Caco-2 (cell line): ENCODE measurements at regions of chr11 and their contacts with region 1.

Region 1: DNA sequence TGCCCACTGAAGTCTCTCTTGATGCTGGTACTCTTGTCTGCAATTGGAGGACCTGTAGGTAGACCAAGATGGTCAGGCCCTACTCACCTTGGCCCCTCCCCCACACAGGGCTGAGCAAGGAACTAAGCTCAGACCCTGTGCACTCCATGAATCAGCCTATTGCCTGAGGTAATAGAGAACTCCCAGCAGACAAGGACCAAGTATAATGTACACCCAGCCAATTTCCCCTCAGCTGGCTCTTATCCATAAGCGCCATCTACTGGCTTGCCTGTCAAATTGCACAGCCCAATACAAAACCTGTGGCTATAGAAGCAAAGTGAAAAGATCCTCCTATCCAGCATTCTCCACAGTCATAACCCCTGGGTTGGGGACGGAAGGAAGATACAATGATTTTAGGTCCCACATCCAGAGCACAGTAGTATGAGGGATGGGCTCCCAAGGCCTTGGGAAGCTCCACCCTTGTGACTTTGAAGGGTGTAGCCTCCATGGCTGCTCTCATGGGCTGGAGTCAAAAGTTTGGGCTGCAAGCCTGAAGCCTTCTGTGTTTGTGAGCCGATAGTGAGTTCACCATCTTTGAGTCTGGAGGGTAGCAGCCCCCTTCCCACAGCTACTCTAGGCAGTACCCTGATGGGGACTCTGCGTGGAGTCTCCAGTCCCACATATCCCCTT is 56.0 kb downstream of the GLYATL2 start:
- DNase-seq: peak; percentile 69 to 76
- H3K4me3 ChIP-seq: no peak overlapping the region
- H3K4me3 Mint-ChIP-seq: no peak overlapping the region
- H3K27ac Mint-ChIP-seq: no peak overlapping the region
- H3K4me1 ChIP-seq: peaks cover 40% of the 10 kb centered on the region
- H3K4me1 Mint-ChIP-seq: peaks cover 24% of the 10 kb centered on the region
- H3K27me3 ChIP-seq: no peaks in the 10 kb centered on the region
- H3K27me3 Mint-ChIP-seq: no peaks in the 10 kb centered on the region
- CTCF ChIP-seq: peak; percentile 77 to 89

Region 2: GRCh38 chr11:58567889-58568512 is 220.5 kb before region 1 on chr11:
- CTCF ChIA-PET with region 1: no interaction called
- POLR2A ChIA-PET with region 1: no interaction called
- intact Hi-C with region 1: loop called (anchors 2 kb)
- DNase-seq: peak; percentile 68 to 73
- H3K4me3 ChIP-seq: no peak overlapping the region
- H3K4me3 Mint-ChIP-seq: no peak overlapping the region
- H3K27ac Mint-ChIP-seq: no peak overlapping the region
- H3K4me1 ChIP-seq: no peaks in the 10 kb centered on the region
- H3K4me1 Mint-ChIP-seq: no peaks in the 10 kb centered on the region
- H3K27me3 ChIP-seq: no peaks in the 10 kb centered on the region
- H3K27me3 Mint-ChIP-seq: no peaks in the 10 kb centered on the region
- CTCF ChIP-seq: peak; percentile 86 to 95

Region 3: GRCh38 chr11:58654079-58654907 is 134.2 kb before region 1 on chr11:
- CTCF ChIA-PET with region 1: interaction called, 6 read pairs
- POLR2A ChIA-PET with region 1: no interaction called
- intact Hi-C with region 1: loop called (anchors 1 kb)
- DNase-seq: peak; percentile 75 to 82
- H3K4me3 ChIP-seq: no peak overlapping the region
- H3K4me3 Mint-ChIP-seq: no peak overlapping the region
- H3K27ac Mint-ChIP-seq: no peak overlapping the region
- H3K4me1 ChIP-seq: peaks cover 13% of the 10 kb centered on the region; the same call in 1 of the 2 replicates
- H3K4me1 Mint-ChIP-seq: peaks cover 23% of the 10 kb centered on the region
- H3K27me3 ChIP-seq: no peaks in the 10 kb centered on the region
- H3K27me3 Mint-ChIP-seq: no peaks in the 10 kb centered on the region
- CTCF ChIP-seq: peak; percentile 88 to 97

Region 4: DNA sequence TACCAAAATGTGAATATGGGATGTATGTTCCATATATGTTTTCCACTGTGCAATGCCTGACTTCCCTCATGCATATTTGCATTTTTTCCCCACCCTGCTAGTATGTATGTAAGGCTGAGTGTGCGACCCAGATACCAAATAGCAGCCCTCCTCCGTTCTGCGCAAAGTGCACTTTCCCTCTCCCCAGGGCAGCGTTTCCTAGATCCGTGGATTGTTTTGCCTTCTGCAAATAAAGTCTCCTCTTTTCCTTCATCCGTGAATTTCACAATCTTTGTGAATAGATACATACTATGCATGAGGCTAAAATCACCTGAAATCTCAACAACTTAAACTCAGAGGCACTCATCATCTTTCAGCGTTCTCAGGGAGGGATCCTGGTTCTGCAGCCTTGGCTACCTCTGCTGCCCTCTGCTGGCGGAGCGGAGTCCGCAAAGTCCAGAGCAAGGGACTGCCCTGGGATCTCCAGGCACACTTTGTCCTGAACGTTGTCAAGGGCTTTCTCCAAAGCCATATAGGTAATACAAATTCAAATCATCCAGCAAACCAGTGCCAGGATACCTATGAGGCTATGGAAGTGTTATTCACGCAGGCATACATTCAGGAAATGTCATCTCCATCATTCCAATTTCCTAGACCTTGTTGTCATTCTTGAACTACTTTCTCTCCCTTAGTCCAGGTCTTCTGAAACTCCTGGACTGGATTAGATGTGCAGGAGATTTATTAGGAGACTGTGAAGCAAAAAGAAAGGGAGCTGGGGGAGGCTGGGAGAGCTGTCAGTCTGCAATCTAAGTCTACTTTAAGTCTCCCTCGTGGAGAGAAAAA is 112.9 kb before region 1 on chr11:
- CTCF ChIA-PET with region 1: interaction called, 3 read pairs
- POLR2A ChIA-PET with region 1: no interaction called
- intact Hi-C with region 1: loop called (anchors 1 kb)
- DNase-seq: peak; percentile 78 to 85
- H3K4me3 ChIP-seq: no peak overlapping the region
- H3K4me3 Mint-ChIP-seq: no peak overlapping the region
- H3K27ac Mint-ChIP-seq: no peak overlapping the region
- H3K4me1 ChIP-seq: no peaks in the 10 kb centered on the region
- H3K4me1 Mint-ChIP-seq: no peaks in the 10 kb centered on the region
- H3K27me3 ChIP-seq: no peaks in the 10 kb centered on the region
- H3K27me3 Mint-ChIP-seq: no peaks in the 10 kb centered on the region
- CTCF ChIP-seq: peak; percentile 92 to 98

Region 5: DNA sequence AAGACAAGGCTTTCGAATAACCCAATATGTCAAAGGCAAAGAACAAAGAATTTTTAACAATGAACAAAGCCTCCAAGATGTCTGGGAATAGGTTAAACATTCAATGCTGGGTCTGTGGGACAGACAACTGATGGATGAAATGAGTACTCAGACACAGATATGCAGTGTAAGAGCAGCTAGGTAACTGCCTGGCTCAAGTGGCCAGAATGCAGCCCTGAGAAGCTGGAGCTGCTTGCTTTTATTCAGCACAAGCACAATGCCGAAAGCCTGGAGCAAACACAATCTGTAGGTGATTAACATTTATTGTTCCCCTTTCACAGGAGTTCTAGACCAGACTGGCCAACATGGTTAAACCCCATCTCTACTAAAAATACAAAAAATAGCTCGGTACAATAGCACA is 80.7 kb before region 1 on chr11:
- CTCF ChIA-PET with region 1: no interaction called
- POLR2A ChIA-PET with region 1: no interaction called
- intact Hi-C with region 1: loop called (anchors 5 kb)
- DNase-seq: no peak
- H3K4me3 ChIP-seq: no peak overlapping the region
- H3K4me3 Mint-ChIP-seq: no peak overlapping the region
- H3K27ac Mint-ChIP-seq: no peak overlapping the region
- H3K4me1 ChIP-seq: no peaks in the 10 kb centered on the region
- H3K4me1 Mint-ChIP-seq: no peaks in the 10 kb centered on the region
- H3K27me3 ChIP-seq: no peaks in the 10 kb centered on the region
- H3K27me3 Mint-ChIP-seq: no peaks in the 10 kb centered on the region
- CTCF ChIP-seq: no peak

Region 6: GRCh38 chr11:58745705-58746364 is 42.7 kb before region 1 on chr11:
- CTCF ChIA-PET with region 1: no interaction called
- POLR2A ChIA-PET with region 1: no interaction called
- intact Hi-C with region 1: loop called (anchors 5 kb)
- DNase-seq: no peak
- H3K4me3 ChIP-seq: no peak overlapping the region
- H3K4me3 Mint-ChIP-seq: no peak overlapping the region
- H3K27ac Mint-ChIP-seq: no peak overlapping the region
- H3K4me1 ChIP-seq: no peaks in the 10 kb centered on the region
- H3K4me1 Mint-ChIP-seq: no peaks in the 10 kb centered on the region
- H3K27me3 ChIP-seq: no peaks in the 10 kb centered on the region
- H3K27me3 Mint-ChIP-seq: peaks cover 3% of the 10 kb centered on the region
- CTCF ChIP-seq: no peak

Region 7: GRCh38 chr11:58762284-58763119 is 26.0 kb before region 1 on chr11:
- CTCF ChIA-PET with region 1: no interaction called
- POLR2A ChIA-PET with region 1: no interaction called
- intact Hi-C with region 1: loop called (anchors 2 kb)
- DNase-seq: peak; percentile 65 to 82
- H3K4me3 ChIP-seq: no peak overlapping the region
- H3K4me3 Mint-ChIP-seq: peak overlapping the region; percentile 47
- H3K27ac Mint-ChIP-seq: peak overlapping the region; percentile 50
- H3K4me1 ChIP-seq: peaks cover 16% of the 10 kb centered on the region
- H3K4me1 Mint-ChIP-seq: peaks cover 13% of the 10 kb centered on the region
- H3K27me3 ChIP-seq: no peaks in the 10 kb centered on the region
- H3K27me3 Mint-ChIP-seq: no peaks in the 10 kb centered on the region
- CTCF ChIP-seq: no peak